Mammary epithelial cell (primary cell): ENCODE measurements at regions of chr20 and their contacts with region 1.

Region 1: DNA sequence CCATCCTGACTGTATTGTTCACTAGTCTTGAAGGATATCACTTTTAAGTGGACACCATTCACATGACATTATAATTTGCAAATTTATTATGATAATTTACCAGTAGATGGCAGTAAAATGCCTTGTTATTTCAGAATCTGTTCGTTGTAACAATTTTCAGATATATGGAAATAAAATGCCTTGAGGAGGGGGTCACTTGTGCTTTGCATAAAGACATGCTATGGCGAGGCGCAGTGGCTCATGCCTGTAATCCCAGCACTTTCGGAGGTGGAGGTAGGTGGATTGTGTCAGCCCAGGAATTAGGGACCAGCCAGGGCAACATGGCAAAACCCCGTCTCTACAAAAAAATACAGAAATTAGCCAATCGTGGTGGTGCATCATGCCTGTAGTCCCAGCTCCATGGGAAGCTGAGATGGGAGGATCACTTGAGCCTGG is 9.0 kb upstream of the NCOA6 start:
- DNase-seq: peak; percentile 16
- H3K4me3 ChIP-seq: peak overlapping the region in 1 of 3 experiments; percentile 28
- H3K27ac ChIP-seq: no peak overlapping the region
- H3K4me1 ChIP-seq: no peaks in the 10 kb centered on the region
- H3K27me3 ChIP-seq: peaks cover 4% of the 10 kb centered on the region
- CTCF ChIP-seq: peak; percentile 20 to 39

Region 2: DNA sequence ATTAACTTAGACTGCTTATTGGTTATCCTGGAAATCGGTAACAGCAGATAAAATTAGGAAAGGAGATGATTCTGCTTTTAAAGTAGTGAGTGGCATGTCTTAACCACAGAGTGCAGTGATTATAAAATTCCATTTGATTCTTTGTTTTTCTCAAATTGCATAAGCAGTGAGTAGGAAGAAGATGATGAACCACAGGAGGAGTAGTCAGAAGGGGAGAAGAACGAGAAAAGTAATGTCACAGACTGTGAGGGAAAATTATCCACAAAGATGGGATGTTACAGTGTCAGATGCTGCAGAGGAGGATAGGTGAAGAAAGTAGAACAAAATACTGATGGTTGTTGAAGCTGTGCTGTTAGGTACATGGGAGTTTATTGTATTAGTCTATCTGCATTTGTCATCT is 408.4 kb before region 1 on chr20:
- CTCF ChIA-PET with region 1: interaction called, 24 read pairs
- dilution Hi-C with region 1: no loop called
- in situ Hi-C with region 1: no loop called
- intact Hi-C with region 1: no loop called
- DNase-seq: no peak
- H3K4me3 ChIP-seq: no peak overlapping the region
- H3K27ac ChIP-seq: no peak overlapping the region
- H3K4me1 ChIP-seq: no peaks in the 10 kb centered on the region
- H3K27me3 ChIP-seq: no peaks in the 10 kb centered on the region
- CTCF ChIP-seq: no peak

Region 3: DNA sequence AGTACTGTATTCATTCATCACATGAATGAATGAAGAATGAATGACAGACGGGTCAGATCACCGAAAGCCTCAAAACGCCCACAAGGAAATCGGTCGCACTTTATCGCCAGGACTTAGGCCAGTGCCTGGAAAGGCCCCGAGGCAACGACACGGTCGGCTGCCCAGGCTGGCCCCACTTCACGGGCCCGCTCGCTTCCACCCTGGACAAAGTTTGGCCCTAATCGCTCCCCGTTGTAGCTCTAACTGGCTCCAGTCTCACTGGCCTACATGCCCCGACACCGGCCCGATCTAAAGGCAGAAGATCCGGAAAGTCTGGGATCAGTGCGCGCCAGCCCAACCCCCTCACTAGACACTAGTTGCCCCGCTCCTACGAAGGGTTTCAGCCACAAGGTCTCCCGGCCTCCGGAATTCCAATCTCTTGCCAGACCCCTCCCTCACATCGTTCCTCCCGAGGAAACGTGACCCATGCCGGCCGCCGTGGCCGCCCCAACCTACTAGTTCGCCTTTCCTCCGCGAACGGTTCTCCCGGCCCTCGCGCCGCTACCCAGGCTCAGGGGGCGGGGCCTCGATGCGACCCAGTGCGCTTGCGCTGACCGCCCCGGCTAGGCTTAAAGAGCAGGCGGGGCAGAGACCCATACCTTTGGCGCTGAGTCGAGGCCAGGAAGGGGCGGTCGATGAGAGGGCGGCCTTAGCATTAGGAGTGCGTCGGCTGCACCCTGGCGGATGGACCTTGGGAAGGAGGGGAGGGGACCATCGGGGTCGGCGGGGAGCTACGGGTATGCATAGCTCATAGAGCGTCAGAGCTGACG is 121.0 kb after region 1 on chr20 and contains the starts of genes GSS and MYH7B:
- CTCF ChIA-PET with region 1: no interaction called
- dilution Hi-C with region 1: no loop called
- in situ Hi-C with region 1: no loop called
- intact Hi-C with region 1: loop called (anchors 1 kb)
- DNase-seq: peak; percentile 95
- H3K4me3 ChIP-seq: peak within 1 kb of the TSS; percentile 68 to 83 (median 79)
- H3K27ac ChIP-seq: peak within 1 kb of the TSS; percentile 76
- H3K4me1 ChIP-seq: peaks cover 6% of the 10 kb centered on the region
- H3K27me3 ChIP-seq: no peaks in the 10 kb centered on the region
- CTCF ChIP-seq: peak; percentile 6 to 66
- total RNA-seq, gene GSS: 102 to 115 TPM
- total RNA-seq, gene MYH7B: under 0.01 to 0.28 TPM

Region 4: DNA sequence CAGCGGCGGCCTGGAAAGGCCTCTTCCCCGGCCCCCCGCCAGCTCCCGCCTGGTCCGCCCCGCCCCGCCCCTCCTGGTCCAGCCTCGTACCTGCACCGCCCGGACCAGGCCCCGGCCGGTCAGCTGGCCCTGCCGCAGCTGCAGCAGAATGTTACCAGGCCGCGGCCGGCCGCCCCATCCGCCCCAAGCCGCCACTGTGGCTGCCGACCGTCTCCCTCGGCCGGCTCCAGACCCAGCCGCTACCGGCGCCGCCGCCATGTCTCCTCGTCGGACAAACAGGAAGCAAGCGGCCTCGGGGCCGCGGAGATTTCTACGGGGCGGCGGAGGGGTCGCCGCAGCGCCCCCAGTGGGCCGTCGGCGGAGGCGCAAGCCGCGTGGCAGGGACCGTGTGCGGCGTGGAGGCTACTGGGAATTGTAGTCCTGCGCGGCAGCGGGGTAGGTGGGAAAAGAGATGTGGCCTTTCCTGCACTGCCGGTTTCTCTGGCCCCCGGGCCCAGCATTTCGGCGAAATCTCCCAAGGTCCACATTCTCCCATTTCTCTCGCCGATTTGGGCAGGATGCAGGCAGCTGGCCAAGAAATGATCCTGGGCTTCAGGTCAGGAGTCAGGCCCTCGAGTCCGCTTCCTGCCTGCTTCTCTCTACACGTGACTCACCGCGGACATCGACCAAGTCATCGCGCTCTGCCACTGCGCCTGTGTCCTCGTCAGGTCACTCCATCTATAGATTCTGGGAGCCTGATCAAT is 258.2 kb after region 1 on chr20 and contains the start of gene TRPC4AP:
- CTCF ChIA-PET with region 1: no interaction called
- dilution Hi-C with region 1: no loop called
- in situ Hi-C with region 1: no loop called
- intact Hi-C with region 1: loop called (anchors 10 kb)
- DNase-seq: peak; percentile 87
- H3K4me3 ChIP-seq: peak within 1 kb of the TSS; percentile 75 to 99 (median 97)
- H3K27ac ChIP-seq: peak within 1 kb of the TSS; percentile 72
- H3K4me1 ChIP-seq: peaks cover 30% of the 10 kb centered on the region
- H3K27me3 ChIP-seq: no peaks in the 10 kb centered on the region
- CTCF ChIP-seq: peak; percentile 81 to 98
- total RNA-seq, gene TRPC4AP: 63.8 to 89.0 TPM

Region 5: DNA sequence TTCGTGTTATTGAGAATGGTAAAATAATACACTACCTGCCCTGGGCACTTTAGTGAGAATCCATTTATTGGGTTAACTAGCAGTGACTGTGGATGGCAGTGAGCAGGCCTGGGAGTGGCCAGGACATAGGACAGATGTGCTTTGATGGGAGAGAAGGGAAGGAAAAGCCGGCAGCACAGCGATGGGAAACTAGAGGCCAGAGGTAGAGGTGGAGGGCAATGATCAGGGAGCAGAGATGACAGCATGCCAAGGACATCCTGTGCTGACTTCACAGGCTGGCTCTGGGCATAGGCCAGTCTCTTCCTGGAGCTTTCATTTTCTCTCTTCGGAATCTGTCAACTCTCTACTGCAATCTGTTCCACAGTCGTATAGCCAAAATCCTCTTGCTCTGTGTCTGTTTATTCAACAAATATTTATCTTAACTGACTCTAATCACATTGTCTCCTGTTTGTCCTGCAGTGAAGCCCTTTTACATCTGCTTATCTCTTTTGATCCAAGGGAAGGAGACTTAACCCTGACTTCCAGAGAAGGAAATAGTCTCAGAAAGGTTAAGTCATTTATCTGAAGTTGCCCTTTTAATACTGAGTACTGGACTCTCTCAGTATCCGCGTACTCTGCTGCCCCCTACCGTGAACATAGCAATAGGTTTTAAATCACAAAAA is 373.6 kb after region 1 on chr20:
- CTCF ChIA-PET with region 1: no interaction called
- dilution Hi-C with region 1: no loop called
- in situ Hi-C with region 1: no loop called
- intact Hi-C with region 1: loop called (anchors 1 kb)
- DNase-seq: peak; percentile 63
- H3K4me3 ChIP-seq: peak overlapping the region in 1 of 3 experiments; percentile 9
- H3K27ac ChIP-seq: no peak overlapping the region
- H3K4me1 ChIP-seq: peaks cover 6% of the 10 kb centered on the region
- H3K27me3 ChIP-seq: no peaks in the 10 kb centered on the region
- CTCF ChIP-seq: peak; percentile 78 to 86